ENCODE measurements at regions of chr6 and their contacts with region 1.

Region 1: GRCh38 chr6:44655412-44656342 is 268.2 kb downstream of the CDC5L start:
- DNase-seq: peak; percentile 51 to 82 (median 64)
- ATAC-seq: peak; percentile 79
- H3K4me3 ChIP-seq: no peak overlapping the region
- H3K4me3 Mint-ChIP-seq: no peak overlapping the region
- H3K27ac ChIP-seq: no peak overlapping the region
- H3K27ac Mint-ChIP-seq: peak overlapping the region; percentile 51
- H3K4me1 ChIP-seq: peaks cover 10% of the 10 kb centered on the region
- H3K4me1 Mint-ChIP-seq: peaks cover 8% of the 10 kb centered on the region
- H3K27me3 ChIP-seq: peaks cover 0 to 3% of the 10 kb centered on the region in 2 experiments
- H3K27me3 Mint-ChIP-seq: peaks cover 3% of the 10 kb centered on the region
- CTCF ChIP-seq: peak; percentile 95

Region 2: DNA sequence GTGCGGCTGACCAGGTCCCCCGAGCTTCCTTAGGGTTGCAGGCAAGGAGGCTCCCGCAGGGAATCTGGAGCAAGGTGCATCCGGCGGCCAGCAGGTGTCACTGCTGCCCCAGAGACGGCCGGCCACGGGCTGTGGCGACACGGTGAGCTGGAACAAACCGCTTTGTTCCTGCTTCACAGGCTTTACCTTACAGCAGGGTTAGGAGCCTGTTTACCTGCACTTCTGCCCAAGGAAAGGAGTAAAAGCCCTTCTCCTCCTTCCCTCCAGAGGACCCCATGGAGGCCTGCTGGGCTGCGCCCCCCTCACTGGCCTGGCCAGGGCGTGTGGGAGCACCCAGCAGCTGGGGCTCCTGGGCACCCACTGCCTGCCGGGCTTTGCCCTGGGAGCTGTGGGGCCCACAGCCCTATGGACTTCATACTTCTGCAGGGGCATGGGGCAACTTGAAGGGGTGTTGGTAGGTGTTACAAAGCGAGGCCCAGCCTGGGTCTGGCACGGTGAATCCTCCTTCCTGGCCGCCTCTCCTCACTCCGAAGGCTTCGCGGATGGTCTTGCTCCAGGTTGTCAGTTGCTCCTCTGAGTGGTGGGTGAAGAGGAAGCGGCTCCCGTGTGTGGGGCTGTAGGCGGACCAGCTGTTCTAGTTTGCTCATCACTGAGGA is 179.8 kb before region 1 on chr6:
- CTCF ChIA-PET with region 1: interaction called, 5 read pairs
- POLR2A ChIA-PET with region 1: no interaction called
- intact Hi-C with region 1: loop called (anchors 5 to 10 kb)
- DNase-seq: peak; percentile 41 to 80 (median 62)
- ATAC-seq: peak; percentile 89
- H3K4me3 ChIP-seq: no peak overlapping the region
- H3K4me3 Mint-ChIP-seq: no peak overlapping the region
- H3K27ac ChIP-seq: no peak overlapping the region
- H3K27ac Mint-ChIP-seq: no peak overlapping the region
- H3K4me1 ChIP-seq: peaks cover 9% of the 10 kb centered on the region
- H3K4me1 Mint-ChIP-seq: peaks cover 5% of the 10 kb centered on the region
- H3K27me3 ChIP-seq: peaks cover 0 to 5% of the 10 kb centered on the region in 2 experiments
- H3K27me3 Mint-ChIP-seq: no peaks in the 10 kb centered on the region
- CTCF ChIP-seq: peak; percentile 85

Region 3: DNA sequence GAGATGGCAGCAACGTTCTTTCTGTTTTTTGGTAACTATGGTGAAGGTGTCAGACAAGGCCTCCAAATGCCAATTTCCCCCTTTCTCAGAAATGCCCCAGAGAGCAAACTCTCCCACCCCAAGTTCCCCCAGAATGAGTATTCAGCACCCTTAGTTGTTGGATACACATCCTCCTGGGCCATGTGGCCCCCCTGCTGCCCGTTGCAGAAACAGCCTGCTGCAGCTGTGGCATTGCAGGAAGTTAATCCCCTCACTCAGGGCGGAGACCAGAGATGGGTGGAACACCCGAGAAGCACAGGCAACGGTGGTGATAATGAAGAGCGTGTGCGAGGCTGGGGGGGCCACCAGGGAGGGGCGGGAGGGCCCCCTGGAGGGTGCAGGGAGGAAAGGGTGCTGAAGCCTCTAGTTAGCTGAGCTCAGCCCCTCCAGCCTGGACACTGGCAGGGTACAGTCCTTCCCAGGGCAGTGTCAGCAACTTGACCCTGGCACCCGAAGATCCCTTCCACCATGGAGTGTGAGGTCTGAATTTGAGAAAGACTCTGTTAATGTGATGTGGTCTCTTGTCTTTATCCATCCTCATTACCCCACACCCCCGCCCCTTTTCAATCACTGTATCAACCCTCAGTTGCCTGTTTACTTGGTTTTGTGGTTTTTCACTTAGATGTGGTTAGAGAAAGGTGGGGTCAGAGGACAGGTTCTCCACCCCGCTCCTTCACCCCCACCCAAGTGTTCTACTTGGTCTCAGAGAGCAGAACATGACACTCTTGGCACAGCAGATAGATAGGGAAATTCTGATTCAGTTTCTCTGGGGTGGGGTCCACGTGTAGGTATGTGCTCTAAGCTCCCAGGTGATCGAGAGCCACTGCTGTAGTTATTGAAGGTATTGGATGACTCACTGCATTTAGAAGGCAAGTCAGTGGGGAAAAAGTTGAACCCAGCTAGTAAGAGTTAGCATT is 930.8 kb after region 1 on chr6:
- CTCF ChIA-PET with region 1: no interaction called
- POLR2A ChIA-PET with region 1: no interaction called
- intact Hi-C with region 1: loop called in 1 of 2 experiments (anchors 5 kb)
- DNase-seq: peak; percentile 31 to 96 (median 54)
- ATAC-seq: peak; percentile 81
- H3K4me3 ChIP-seq: peak overlapping the region; percentile 24
- H3K4me3 Mint-ChIP-seq: peak overlapping the region; percentile 84
- H3K27ac ChIP-seq: peak overlapping the region in 1 of 2 donors; percentile 16
- H3K27ac Mint-ChIP-seq: peak overlapping the region; percentile 79
- H3K4me1 ChIP-seq: peaks cover 59% of the 10 kb centered on the region
- H3K4me1 Mint-ChIP-seq: peaks cover 70% of the 10 kb centered on the region
- H3K27me3 ChIP-seq: no peaks in the 10 kb centered on the region
- H3K27me3 Mint-ChIP-seq: no peaks in the 10 kb centered on the region
- CTCF ChIP-seq: peak; percentile 25

Measured in CD4-positive, alpha-beta T cell (primary cell).